ENCODE measurements at regions of chr2 and their contacts with region 1.

Region 1: DNA sequence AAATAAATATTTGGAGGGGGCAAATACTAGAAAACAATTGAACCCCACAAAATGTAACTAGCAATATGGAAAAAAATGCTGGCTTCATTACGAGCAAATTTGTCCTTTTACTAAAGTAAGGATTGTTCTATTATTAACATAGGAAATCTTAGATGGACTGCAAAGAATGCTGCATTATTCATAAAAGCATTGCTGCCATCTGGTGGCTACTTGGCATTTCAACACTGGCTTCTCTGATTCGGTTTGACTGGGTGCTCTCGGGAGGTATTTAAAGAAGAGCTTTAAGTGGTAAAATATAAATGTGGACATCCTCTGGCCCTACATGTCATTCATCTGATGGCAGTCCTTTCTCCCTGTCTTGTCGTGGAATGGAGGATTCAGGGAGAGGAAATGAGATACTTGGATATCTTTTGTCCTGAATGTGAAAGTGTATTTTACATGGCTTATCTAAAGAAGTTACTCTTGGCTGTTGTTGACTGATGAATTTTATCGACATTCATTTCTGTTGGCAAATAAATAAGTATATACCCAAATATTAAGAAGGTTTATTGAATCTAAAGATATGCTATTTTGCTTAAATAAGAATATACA is 130.2 kb downstream of the ARHGAP15 start:
- DNase-seq: peak; percentile 51
- ATAC-seq: peak; percentile 87
- H3K4me3 ChIP-seq: no peak overlapping the region
- H3K27ac ChIP-seq: no peak overlapping the region
- H3K4me1 ChIP-seq: no peaks in the 10 kb centered on the region
- H3K27me3 ChIP-seq: peaks cover 13% of the 10 kb centered on the region
- CTCF ChIP-seq: peak; percentile 73 to 81 (median 76)
- POLR2A ChIP-seq: no peak
- RAD21 ChIP-seq: peak; percentile 75

Region 2: GRCh38 chr2:143034292-143035074 is 225.0 kb before region 1 on chr2:
- CTCF ChIA-PET with region 1: interaction called, 9 read pairs
- POLR2A ChIA-PET with region 1: no interaction called
- RAD21 ChIA-PET with region 1: no interaction called
- intact Hi-C with region 1: loop called (anchors 1 kb)
- DNase-seq: peak; percentile 67
- ATAC-seq: peak; percentile 84
- H3K4me3 ChIP-seq: no peak overlapping the region
- H3K27ac ChIP-seq: no peak overlapping the region
- H3K4me1 ChIP-seq: no peaks in the 10 kb centered on the region
- H3K27me3 ChIP-seq: no peaks in the 10 kb centered on the region
- CTCF ChIP-seq: peak; percentile 82 to 98 (median 97)
- POLR2A ChIP-seq: no peak
- RAD21 ChIP-seq: peak; percentile 72

Region 3: DNA sequence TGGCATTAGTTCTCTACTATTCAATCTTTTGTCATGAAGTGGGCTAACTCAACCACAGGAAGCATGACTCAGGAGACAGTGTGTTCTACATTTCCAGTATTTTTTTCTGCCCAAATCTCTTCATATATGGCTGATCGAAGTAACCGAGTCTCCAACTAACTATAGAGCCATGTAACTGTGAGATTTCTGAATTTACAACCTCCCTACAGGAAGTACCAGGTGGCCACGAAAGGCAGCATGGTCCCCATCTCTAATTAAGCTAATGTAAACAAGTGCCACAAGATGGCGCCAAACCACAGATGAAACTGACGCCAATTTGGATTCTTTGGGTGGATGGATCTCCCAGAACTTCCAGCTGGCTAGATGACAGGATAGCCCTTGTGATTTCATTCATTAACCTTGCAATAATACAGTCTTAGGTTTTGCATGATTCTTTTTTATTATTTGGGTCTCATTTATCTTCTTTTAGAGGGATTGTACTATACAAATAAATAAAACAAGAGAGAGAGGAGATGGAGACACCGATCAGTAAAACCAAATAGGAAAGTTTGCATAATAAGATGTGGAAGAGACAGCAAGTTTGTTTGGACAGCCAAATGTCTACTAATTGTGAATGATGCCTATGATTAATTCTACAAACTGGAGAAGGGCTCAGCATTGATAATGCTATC is 148.6 kb before region 1 on chr2:
- CTCF ChIA-PET with region 1: interaction called, 27 read pairs
- POLR2A ChIA-PET with region 1: no interaction called
- RAD21 ChIA-PET with region 1: interaction called in 1 of 2 experiments, 3 read pairs
- intact Hi-C with region 1: loop called (anchors 1 kb)
- DNase-seq: peak; percentile 51
- ATAC-seq: peak; percentile 82
- H3K4me3 ChIP-seq: no peak overlapping the region
- H3K27ac ChIP-seq: no peak overlapping the region
- H3K4me1 ChIP-seq: no peaks in the 10 kb centered on the region
- H3K27me3 ChIP-seq: no peaks in the 10 kb centered on the region
- CTCF ChIP-seq: peak; percentile 60 to 83 (median 65); a peak in 5 of 6 replicates
- POLR2A ChIP-seq: no peak
- RAD21 ChIP-seq: peak; percentile 71

Region 4: GRCh38 chr2:143162123-143162837 is 97.2 kb before region 1 on chr2:
- CTCF ChIA-PET with region 1: interaction called, 38 read pairs
- POLR2A ChIA-PET with region 1: no interaction called
- RAD21 ChIA-PET with region 1: no interaction called
- intact Hi-C with region 1: loop called (anchors 1 kb)
- DNase-seq: peak; percentile 56
- ATAC-seq: peak; percentile 98
- H3K4me3 ChIP-seq: no peak overlapping the region
- H3K27ac ChIP-seq: no peak overlapping the region
- H3K4me1 ChIP-seq: no peaks in the 10 kb centered on the region
- H3K27me3 ChIP-seq: peaks cover 63% of the 10 kb centered on the region
- CTCF ChIP-seq: peak; percentile 56 to 72 (median 72); a peak in 5 of 6 replicates
- POLR2A ChIP-seq: no peak
- RAD21 ChIP-seq: peak; percentile 65

Region 5: GRCh38 chr2:143205106-143205764 is 54.2 kb before region 1 on chr2:
- CTCF ChIA-PET with region 1: interaction called, 5 read pairs
- POLR2A ChIA-PET with region 1: no interaction called
- RAD21 ChIA-PET with region 1: no interaction called
- intact Hi-C with region 1: loop called (anchors 2 kb)
- DNase-seq: peak; percentile 6
- ATAC-seq: no peak
- H3K4me3 ChIP-seq: no peak overlapping the region
- H3K27ac ChIP-seq: no peak overlapping the region
- H3K4me1 ChIP-seq: no peaks in the 10 kb centered on the region
- H3K27me3 ChIP-seq: no peaks in the 10 kb centered on the region
- CTCF ChIP-seq: peak in 2 of 3 experiments; percentile 12 to 44; a peak in 3 of 6 replicates
- POLR2A ChIP-seq: no peak
- RAD21 ChIP-seq: 0 out of 2 replicates have a peak, but pooled peaks have one; percentile 19

Region 6: DNA sequence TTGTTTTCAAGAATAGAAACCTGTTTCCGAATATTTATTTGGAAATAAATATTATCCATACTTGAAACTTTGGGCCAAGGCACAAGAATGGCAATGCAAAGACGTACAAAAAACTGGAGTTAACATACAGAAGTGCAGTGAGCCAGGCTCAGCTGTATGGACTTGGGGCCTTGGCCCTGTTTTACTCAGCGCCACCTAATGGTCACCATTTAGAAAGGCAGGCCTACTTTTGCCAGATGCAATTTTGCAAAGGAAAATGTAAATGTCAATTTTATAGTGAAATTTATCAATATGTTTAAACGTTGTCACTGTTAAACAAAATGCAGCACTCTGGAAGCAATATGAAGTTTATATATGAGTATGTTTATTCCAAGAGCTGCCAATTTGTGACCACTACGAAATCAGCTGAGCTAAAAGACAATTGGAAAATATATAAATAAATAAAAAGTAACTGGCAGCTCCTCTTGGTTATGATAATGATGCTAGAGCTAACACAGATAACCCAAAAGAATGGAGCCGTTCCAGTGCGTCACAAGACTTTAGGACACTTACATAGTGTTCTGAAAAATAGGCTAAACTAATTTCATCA is 24.7 kb after region 1 on chr2:
- CTCF ChIA-PET with region 1: interaction called, 12 read pairs
- POLR2A ChIA-PET with region 1: no interaction called
- RAD21 ChIA-PET with region 1: no interaction called
- intact Hi-C with region 1: no loop called
- DNase-seq: peak; percentile 47
- ATAC-seq: peak; percentile 79
- H3K4me3 ChIP-seq: no peak overlapping the region
- H3K27ac ChIP-seq: no peak overlapping the region
- H3K4me1 ChIP-seq: no peaks in the 10 kb centered on the region
- H3K27me3 ChIP-seq: peaks cover 7% of the 10 kb centered on the region; the same call in 1 of the 2 replicates
- CTCF ChIP-seq: peak; percentile 38 to 90 (median 80); a peak in 5 of 6 replicates
- POLR2A ChIP-seq: no peak
- RAD21 ChIP-seq: peak; percentile 32; the same call in 1 of the 2 replicates

Region 7: DNA sequence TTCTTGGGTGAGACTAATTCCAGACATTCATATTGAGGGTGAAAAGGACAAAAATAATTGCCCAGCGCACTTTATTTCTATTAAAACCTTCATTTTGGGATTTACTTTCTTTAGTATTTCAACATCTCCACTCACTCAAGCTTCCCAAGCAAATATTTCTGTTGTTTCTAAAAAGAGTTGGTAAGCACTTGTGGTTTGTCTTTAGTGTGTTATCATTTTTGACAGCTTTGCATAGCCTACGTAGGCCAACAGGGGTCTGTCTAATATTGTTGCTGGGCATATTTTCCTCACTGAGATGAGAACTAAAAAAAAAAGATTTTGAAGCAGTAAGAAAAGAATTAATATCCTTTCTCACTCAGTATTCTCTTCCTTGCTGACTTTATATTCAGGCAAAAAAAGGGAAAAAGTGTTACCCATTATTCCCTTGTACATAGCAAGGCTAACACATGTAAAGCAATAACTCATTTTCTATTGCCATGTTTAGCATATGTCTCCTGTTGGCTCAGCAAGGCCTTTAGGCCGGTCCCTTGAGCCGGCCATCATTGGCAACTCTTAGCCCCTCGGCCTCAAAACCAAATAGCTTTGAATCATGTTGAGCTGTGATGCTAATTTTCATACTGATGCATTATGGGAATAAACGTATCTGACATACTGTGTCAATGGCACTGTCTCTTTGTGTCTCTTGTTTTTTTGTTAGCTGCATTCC is 363.9 kb after region 1 on chr2:
- CTCF ChIA-PET with region 1: no interaction called
- POLR2A ChIA-PET with region 1: no interaction called
- RAD21 ChIA-PET with region 1: no interaction called
- intact Hi-C with region 1: no loop called
- DNase-seq: no peak
- ATAC-seq: no peak
- H3K4me3 ChIP-seq: no peak overlapping the region
- H3K27ac ChIP-seq: no peak overlapping the region
- H3K4me1 ChIP-seq: no peaks in the 10 kb centered on the region
- H3K27me3 ChIP-seq: no peaks in the 10 kb centered on the region
- CTCF ChIP-seq: no peak
- POLR2A ChIP-seq: no peak
- RAD21 ChIP-seq: no peak